Caco-2 (cell line): ENCODE measurements at regions of chr11 and their contacts with region 1.

Region 1: GRCh38 chr11:117098269-117099232 is at the start of gene SIK3:
- DNase-seq: peak; percentile 96 to 99
- H3K4me3 ChIP-seq: peak within 1 kb of the TSS; percentile 90
- H3K4me3 Mint-ChIP-seq: peak within 1 kb of the TSS; percentile 77
- H3K27ac Mint-ChIP-seq: peak within 1 kb of the TSS; percentile 99
- H3K4me1 ChIP-seq: peaks cover 46% of the 10 kb centered on the region
- H3K4me1 Mint-ChIP-seq: peaks cover 51% of the 10 kb centered on the region
- H3K27me3 ChIP-seq: no peaks in the 10 kb centered on the region
- H3K27me3 Mint-ChIP-seq: no peaks in the 10 kb centered on the region
- CTCF ChIP-seq: peak; percentile 82 to 92
- total RNA-seq, gene SIK3: 65.7 and 69.4 TPM in 2 replicates

Region 2: GRCh38 chr11:116787786-116788486 is 310.6 kb before region 1 on chr11 and contains the start of gene ZPR1:
- CTCF ChIA-PET with region 1: interaction called, 4 read pairs
- POLR2A ChIA-PET with region 1: interaction called, 5 read pairs
- intact Hi-C with region 1: loop called (anchors 5 kb)
- DNase-seq: peak; percentile 84 to 90
- H3K4me3 ChIP-seq: peak within 1 kb of the TSS; percentile 80
- H3K4me3 Mint-ChIP-seq: peak within 1 kb of the TSS; percentile 80
- H3K27ac Mint-ChIP-seq: peak within 1 kb of the TSS; percentile 94
- H3K4me1 ChIP-seq: peaks cover 46% of the 10 kb centered on the region
- H3K4me1 Mint-ChIP-seq: peaks cover 42% of the 10 kb centered on the region
- H3K27me3 ChIP-seq: no peaks in the 10 kb centered on the region
- H3K27me3 Mint-ChIP-seq: no peaks in the 10 kb centered on the region
- CTCF ChIP-seq: no peak
- total RNA-seq, gene ZPR1: 168 and 194 TPM in 2 replicates

Region 3: DNA sequence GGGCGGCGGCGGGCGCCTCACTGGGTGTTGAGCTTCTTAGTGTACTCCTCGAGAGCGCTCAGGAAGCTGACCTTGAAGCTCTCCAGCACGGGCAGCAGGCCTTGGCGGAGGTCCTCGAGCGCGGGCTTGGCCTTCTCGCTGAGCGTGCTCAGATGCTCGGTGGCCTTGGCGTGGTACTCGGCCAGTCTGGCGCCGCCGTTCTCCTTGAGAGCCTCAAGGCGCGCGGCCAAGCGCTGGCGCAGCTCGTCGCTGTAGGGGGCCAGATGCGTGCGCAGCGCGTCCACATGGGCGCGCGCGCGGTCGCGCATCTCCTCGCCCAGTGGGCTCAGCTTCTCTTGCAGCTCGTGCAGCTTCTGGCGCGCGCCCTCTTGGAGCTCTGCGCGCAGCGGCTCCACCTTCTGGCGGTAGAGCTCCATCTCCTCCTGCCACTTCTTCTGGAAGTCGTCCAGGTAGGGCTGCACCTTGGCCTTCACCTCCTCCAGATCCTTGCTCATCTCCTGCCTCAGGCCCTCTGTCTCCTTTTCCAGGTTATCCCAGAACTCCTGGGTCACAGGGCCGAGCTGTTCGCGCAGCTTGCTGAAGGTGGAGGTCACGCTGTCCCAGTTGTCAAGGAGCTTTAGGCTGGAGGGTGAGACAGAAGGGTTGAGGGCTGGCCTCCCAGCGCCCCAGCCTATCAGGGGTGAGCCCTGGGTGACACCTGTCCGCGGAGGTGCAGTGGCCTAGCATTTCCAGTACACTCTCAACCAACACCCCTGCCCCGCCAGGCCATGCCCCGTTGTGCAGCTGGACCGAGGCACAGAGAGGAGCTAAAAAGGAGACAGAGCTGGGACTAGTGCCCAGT is 262.5 kb before region 1 on chr11:
- CTCF ChIA-PET with region 1: interaction called, 3 read pairs
- POLR2A ChIA-PET with region 1: no interaction called
- intact Hi-C with region 1: loop called (anchors 1 kb)
- DNase-seq: peak; percentile 69 to 77
- H3K4me3 ChIP-seq: peak overlapping the region; percentile 40
- H3K4me3 Mint-ChIP-seq: peak overlapping the region; percentile 68
- H3K27ac Mint-ChIP-seq: peak overlapping the region; percentile 92
- H3K4me1 ChIP-seq: peaks cover 86% of the 10 kb centered on the region
- H3K4me1 Mint-ChIP-seq: peaks cover 65% of the 10 kb centered on the region
- H3K27me3 ChIP-seq: no peaks in the 10 kb centered on the region
- H3K27me3 Mint-ChIP-seq: no peaks in the 10 kb centered on the region
- CTCF ChIP-seq: peak; percentile 51

Region 4: DNA sequence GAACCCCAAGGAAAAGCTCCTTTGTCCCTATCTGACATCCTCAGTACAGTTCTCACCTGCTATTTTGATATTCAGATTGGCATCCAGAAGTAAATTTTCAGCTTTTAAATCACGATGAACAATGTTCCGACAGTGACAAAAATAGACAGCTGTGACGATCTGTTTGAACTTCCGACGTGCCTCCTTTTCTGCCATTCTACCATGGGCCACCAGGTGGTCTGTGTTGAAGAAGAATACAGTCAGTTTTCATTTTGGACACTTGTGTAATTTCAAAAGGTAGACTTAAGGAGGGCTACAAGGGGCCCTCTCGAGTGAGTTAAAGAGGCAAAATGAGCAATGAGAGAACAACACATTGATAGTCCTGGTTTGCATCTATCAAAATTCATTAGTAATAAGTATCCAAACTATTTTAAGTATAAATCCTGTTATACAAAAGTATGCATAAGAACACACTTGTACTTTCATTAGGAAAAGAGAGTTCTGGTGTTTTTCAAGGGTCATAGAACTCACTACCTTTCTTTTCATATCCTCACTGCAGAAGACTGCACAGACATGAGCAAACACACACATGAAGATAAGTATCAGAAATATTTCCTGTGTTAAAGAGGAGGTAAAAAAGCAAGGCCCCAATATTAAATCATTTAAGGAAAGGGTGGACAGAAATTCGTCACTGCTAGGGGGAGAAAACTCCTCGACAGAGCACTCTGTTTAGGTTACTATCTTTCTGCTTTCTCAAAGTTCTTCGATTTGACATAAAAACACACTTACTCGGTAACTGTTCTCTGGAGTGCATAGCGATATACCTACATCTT is 171.2 kb before region 1 on chr11:
- CTCF ChIA-PET with region 1: interaction called, 4 read pairs
- POLR2A ChIA-PET with region 1: interaction called, 3 read pairs
- intact Hi-C with region 1: loop called (anchors 2 kb)
- DNase-seq: peak in 1 of 2 experiments; percentile 69
- H3K4me3 ChIP-seq: no peak overlapping the region
- H3K4me3 Mint-ChIP-seq: no peak overlapping the region
- H3K27ac Mint-ChIP-seq: no peak overlapping the region
- H3K4me1 ChIP-seq: peaks cover 17% of the 10 kb centered on the region; the same call in 1 of the 2 replicates
- H3K4me1 Mint-ChIP-seq: peaks cover 22% of the 10 kb centered on the region
- H3K27me3 ChIP-seq: no peaks in the 10 kb centered on the region
- H3K27me3 Mint-ChIP-seq: no peaks in the 10 kb centered on the region
- CTCF ChIP-seq: peak; percentile 82 to 85

Region 5: GRCh38 chr11:117020869-117021564 is 77.5 kb before region 1 on chr11:
- CTCF ChIA-PET with region 1: interaction called, 3 read pairs
- POLR2A ChIA-PET with region 1: no interaction called
- intact Hi-C with region 1: loop called (anchors 1 kb)
- DNase-seq: peak; percentile 58 to 62
- H3K4me3 ChIP-seq: peak overlapping the region; percentile 2; the same call in 1 of the 2 replicates
- H3K4me3 Mint-ChIP-seq: peak overlapping the region; percentile 70
- H3K27ac Mint-ChIP-seq: peak overlapping the region; percentile 92
- H3K4me1 ChIP-seq: peaks cover 63% of the 10 kb centered on the region
- H3K4me1 Mint-ChIP-seq: peaks cover 57% of the 10 kb centered on the region
- H3K27me3 ChIP-seq: no peaks in the 10 kb centered on the region
- H3K27me3 Mint-ChIP-seq: no peaks in the 10 kb centered on the region
- CTCF ChIP-seq: no peak

Region 6: GRCh38 chr11:117087446-117087845 is 11.1 kb before region 1 on chr11:
- CTCF ChIA-PET with region 1: interaction called, 8 read pairs
- POLR2A ChIA-PET with region 1: no interaction called
- intact Hi-C with region 1: loop called (anchors 1 kb)
- DNase-seq: peak; percentile 43 to 74
- H3K4me3 ChIP-seq: no peak overlapping the region
- H3K4me3 Mint-ChIP-seq: peak overlapping the region; percentile 4
- H3K27ac Mint-ChIP-seq: peak overlapping the region; percentile 12
- H3K4me1 ChIP-seq: peaks cover 79% of the 10 kb centered on the region
- H3K4me1 Mint-ChIP-seq: peaks cover 54% of the 10 kb centered on the region
- H3K27me3 ChIP-seq: no peaks in the 10 kb centered on the region
- H3K27me3 Mint-ChIP-seq: no peaks in the 10 kb centered on the region
- CTCF ChIP-seq: no peak

Region 7: DNA sequence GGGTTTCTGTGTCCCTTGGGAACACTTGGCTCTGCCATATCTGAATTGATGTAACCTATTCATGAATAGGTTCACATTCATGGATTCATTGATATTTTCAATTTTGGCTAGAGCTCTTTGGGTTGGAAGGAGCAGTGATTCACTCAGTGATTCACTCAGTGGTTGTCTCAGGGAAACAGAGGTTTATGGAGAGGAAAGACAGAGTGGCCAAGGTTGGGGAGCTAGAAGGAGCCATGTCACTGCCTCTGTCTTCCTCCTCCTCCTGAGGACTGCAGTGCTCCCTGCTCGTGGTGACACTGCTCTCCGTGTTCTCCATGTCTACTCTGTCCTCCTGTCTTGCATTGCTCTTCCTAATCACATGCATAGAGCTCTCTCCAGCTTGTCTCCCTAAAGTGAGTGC is 246.5 kb after region 1 on chr11:
- CTCF ChIA-PET with region 1: no interaction called
- POLR2A ChIA-PET with region 1: no interaction called
- intact Hi-C with region 1: no loop called
- DNase-seq: no peak
- H3K4me3 ChIP-seq: no peak overlapping the region
- H3K4me3 Mint-ChIP-seq: no peak overlapping the region
- H3K27ac Mint-ChIP-seq: no peak overlapping the region
- H3K4me1 ChIP-seq: no peaks in the 10 kb centered on the region
- H3K4me1 Mint-ChIP-seq: no peaks in the 10 kb centered on the region
- H3K27me3 ChIP-seq: no peaks in the 10 kb centered on the region
- H3K27me3 Mint-ChIP-seq: no peaks in the 10 kb centered on the region
- CTCF ChIP-seq: no peak

Region 8: GRCh38 chr11:117492578-117493251 is 394.2 kb after region 1 on chr11:
- CTCF ChIA-PET with region 1: no interaction called
- POLR2A ChIA-PET with region 1: no interaction called
- intact Hi-C with region 1: no loop called
- DNase-seq: no peak
- H3K4me3 ChIP-seq: no peak overlapping the region
- H3K4me3 Mint-ChIP-seq: no peak overlapping the region
- H3K27ac Mint-ChIP-seq: no peak overlapping the region
- H3K4me1 ChIP-seq: no peaks in the 10 kb centered on the region
- H3K4me1 Mint-ChIP-seq: no peaks in the 10 kb centered on the region
- H3K27me3 ChIP-seq: peaks cover 2% of the 10 kb centered on the region; the same call in 1 of the 2 replicates
- H3K27me3 Mint-ChIP-seq: peaks cover 15% of the 10 kb centered on the region
- CTCF ChIP-seq: no peak

Region 9: DNA sequence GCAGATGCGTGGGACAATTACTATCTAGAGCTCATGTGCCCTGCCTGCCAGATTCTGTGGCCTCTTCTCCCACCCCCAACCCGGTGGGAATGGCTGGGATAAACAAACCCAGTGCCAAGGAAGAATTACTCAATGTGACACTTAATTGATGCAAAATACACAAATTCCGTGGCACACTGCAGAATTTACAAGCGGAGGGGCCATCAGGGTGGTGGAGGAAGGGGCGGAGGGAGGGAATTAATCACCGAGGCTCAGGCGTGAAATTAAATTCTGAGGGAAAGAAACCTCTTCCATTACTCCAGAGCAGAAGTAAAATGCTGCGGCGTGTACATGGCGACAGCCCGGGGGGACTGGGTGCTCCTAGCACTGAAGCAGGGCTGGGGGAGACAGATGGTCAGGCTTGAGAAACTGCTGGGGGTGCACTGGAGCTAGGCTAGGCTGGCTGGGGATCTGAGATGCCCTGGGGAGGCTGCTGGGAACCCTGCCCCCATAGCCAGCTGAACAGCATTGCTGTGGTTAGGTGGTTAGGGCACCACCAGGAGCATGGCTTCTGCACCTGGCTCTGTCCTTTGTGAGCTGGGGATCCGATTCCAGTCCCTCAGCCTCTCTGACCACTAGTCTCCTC is 429.7 kb after region 1 on chr11:
- CTCF ChIA-PET with region 1: no interaction called
- POLR2A ChIA-PET with region 1: no interaction called
- intact Hi-C with region 1: no loop called
- DNase-seq: no peak
- H3K4me3 ChIP-seq: no peak overlapping the region
- H3K4me3 Mint-ChIP-seq: no peak overlapping the region
- H3K27ac Mint-ChIP-seq: no peak overlapping the region
- H3K4me1 ChIP-seq: no peaks in the 10 kb centered on the region
- H3K4me1 Mint-ChIP-seq: no peaks in the 10 kb centered on the region
- H3K27me3 ChIP-seq: no peaks in the 10 kb centered on the region; the same call in 1 of the 2 replicates
- H3K27me3 Mint-ChIP-seq: peaks cover 10% of the 10 kb centered on the region
- CTCF ChIP-seq: no peak